HCT116 (cell line): ENCODE measurements at regions of chr7 and their contacts with region 1.

Region 1: GRCh38 chr7:104252404-104253134 is 44.8 kb upstream of the ORC5 start:
- DNase-seq: peak; percentile 16
- ATAC-seq: peak; percentile 87
- H3K4me3 ChIP-seq: no peak overlapping the region
- H3K27ac ChIP-seq: no peak overlapping the region
- H3K4me1 ChIP-seq: no peaks in the 10 kb centered on the region
- H3K27me3 ChIP-seq: peaks cover 11% of the 10 kb centered on the region
- CTCF ChIP-seq: peak; percentile 17 to 51 (median 28); a peak in 5 of 6 replicates
- POLR2A ChIP-seq: no peak
- RAD21 ChIP-seq: peak; percentile 34

Region 2: GRCh38 chr7:103524042-103524907 is 728.3 kb before region 1 on chr7:
- CTCF ChIA-PET with region 1: no interaction called
- POLR2A ChIA-PET with region 1: no interaction called
- RAD21 ChIA-PET with region 1: no interaction called
- intact Hi-C with region 1: loop called (anchors 5 kb)
- DNase-seq: peak; percentile 12
- ATAC-seq: peak; percentile 62
- H3K4me3 ChIP-seq: no peak overlapping the region
- H3K27ac ChIP-seq: no peak overlapping the region
- H3K4me1 ChIP-seq: no peaks in the 10 kb centered on the region
- H3K27me3 ChIP-seq: peaks cover 57% of the 10 kb centered on the region
- CTCF ChIP-seq: peak; percentile 19 to 44 (median 25); a peak in 3 of 6 replicates
- POLR2A ChIP-seq: no peak
- RAD21 ChIP-seq: peak; percentile 64

Region 3: GRCh38 chr7:104267701-104268368 is 15.3 kb after region 1 on chr7:
- CTCF ChIA-PET with region 1: no interaction called
- POLR2A ChIA-PET with region 1: no interaction called
- RAD21 ChIA-PET with region 1: no interaction called
- intact Hi-C with region 1: no loop called
- DNase-seq: no peak
- ATAC-seq: no peak
- H3K4me3 ChIP-seq: no peak overlapping the region
- H3K27ac ChIP-seq: no peak overlapping the region
- H3K4me1 ChIP-seq: no peaks in the 10 kb centered on the region
- H3K27me3 ChIP-seq: peaks cover 13% of the 10 kb centered on the region
- CTCF ChIP-seq: peak; percentile 10 to 44 (median 34); a peak in 5 of 6 replicates
- POLR2A ChIP-seq: no peak
- RAD21 ChIP-seq: no peak